B cell (primary cell): ENCODE measurements at regions of chr9 and their contacts with region 1.

Region 1: DNA sequence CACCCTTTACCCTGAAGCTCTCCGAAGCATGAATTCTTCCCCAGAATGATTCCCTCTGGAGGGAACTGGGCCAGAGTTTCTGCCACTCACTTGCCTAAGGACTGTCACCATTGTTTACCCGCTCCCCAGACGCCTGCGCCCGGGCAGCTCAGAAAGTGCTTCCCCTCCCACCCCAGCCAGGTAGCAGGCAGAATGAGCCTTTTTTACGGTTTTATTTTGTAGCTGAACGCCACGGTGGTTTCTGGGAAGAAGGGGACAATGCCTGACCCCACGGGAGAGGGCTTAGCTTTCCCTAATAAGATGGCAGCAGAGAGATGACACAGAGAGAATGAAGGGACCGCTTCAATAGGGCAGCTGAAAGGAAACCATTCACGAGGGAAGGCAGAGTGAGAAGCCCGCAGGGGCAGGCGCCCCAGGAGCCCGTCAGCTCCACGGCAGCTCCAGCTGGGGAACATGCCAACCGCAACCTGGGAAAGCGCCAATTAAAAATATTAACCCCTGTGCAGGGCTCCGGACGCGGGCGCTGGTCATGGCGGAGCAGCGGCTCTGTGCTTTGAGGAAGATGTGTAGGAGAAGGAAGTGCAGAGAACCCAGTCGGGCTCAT is 20.4 kb upstream of the NTNG2 start:
- DNase-seq: no peak
- ATAC-seq: no peak
- H3K4me3 ChIP-seq: peak overlapping the region in 3 of 5 experiments; percentile 8 to 29 (median 15)
- H3K4me3 Mint-ChIP-seq: peak overlapping the region; percentile 76
- H3K27ac ChIP-seq: no peak overlapping the region
- H3K27ac Mint-ChIP-seq: no peak overlapping the region
- H3K4me1 ChIP-seq: peaks cover 7% of the 10 kb centered on the region in 2 donors
- H3K4me1 Mint-ChIP-seq: peaks cover 11% of the 10 kb centered on the region
- H3K27me3 ChIP-seq: peaks cover 0 to 47% (median 8%) of the 10 kb centered on the region in 4 experiments
- H3K27me3 Mint-ChIP-seq: peaks cover 62% of the 10 kb centered on the region
- CTCF ChIP-seq: no peak

Region 2: GRCh38 chr9:132008184-132008783 is 133.2 kb before region 1 on chr9:
- CTCF ChIA-PET with region 1: no interaction called
- POLR2A ChIA-PET with region 1: no interaction called
- intact Hi-C with region 1: no loop called
- DNase-seq: no peak
- ATAC-seq: no peak
- H3K4me3 ChIP-seq: no peak overlapping the region
- H3K4me3 Mint-ChIP-seq: no peak overlapping the region
- H3K27ac ChIP-seq: no peak overlapping the region
- H3K27ac Mint-ChIP-seq: no peak overlapping the region
- H3K4me1 ChIP-seq: peaks cover 9 to 10% of the 10 kb centered on the region in 2 donors
- H3K4me1 Mint-ChIP-seq: peaks cover 21% of the 10 kb centered on the region
- H3K27me3 ChIP-seq: no peaks in the 10 kb centered on the region
- H3K27me3 Mint-ChIP-seq: no peaks in the 10 kb centered on the region
- CTCF ChIP-seq: no peak

Region 3: DNA sequence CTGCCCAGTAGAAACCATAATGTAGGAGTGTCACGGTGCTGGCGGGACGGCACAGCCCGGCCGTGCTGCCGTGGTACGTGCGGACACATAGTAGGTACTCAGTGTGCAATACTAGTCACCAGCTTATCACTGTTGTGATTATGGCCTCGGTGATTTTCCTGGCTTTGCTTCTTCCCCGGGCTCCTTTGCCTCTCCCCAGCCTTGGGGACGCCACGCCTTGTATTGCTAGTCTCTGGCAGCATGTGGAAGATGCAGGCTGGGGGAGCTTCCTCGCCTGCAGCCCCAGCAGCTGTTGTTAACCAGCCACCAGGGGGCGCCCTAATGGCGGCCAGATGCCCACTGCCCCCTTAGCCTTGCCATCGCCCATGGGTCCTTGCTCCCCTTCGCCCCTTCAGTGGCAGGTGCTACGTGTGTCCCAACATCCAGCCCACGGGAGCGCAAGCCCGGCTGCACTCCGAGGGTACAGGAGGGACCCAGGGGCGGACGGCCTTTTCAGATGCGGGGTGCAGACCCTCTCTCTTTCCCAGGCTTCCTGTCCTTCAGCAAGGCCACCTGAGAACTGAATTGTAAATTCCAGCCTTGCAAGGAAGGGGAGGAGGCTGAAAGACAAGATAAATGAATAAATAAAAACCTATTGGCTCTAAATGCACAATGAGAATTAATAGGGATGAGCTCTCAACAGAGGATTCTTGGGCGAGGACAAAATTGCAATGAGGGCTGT is 28.4 kb after region 1 on chr9:
- CTCF ChIA-PET with region 1: interaction called, 14 read pairs
- POLR2A ChIA-PET with region 1: no interaction called
- intact Hi-C with region 1: no loop called
- DNase-seq: peak; percentile 75
- ATAC-seq: peak; percentile 49
- H3K4me3 ChIP-seq: no peak overlapping the region
- H3K4me3 Mint-ChIP-seq: no peak overlapping the region
- H3K27ac ChIP-seq: no peak overlapping the region
- H3K27ac Mint-ChIP-seq: no peak overlapping the region
- H3K4me1 ChIP-seq: peaks cover under 1 to 2% of the 10 kb centered on the region in 2 donors
- H3K4me1 Mint-ChIP-seq: peaks cover under 1% of the 10 kb centered on the region
- H3K27me3 ChIP-seq: peaks cover 0 to 43% (median 17%) of the 10 kb centered on the region in 4 experiments
- H3K27me3 Mint-ChIP-seq: peaks cover 63% of the 10 kb centered on the region
- CTCF ChIP-seq: peak; percentile 95